Esophagus squamous epithelium (tissue), 5 donors: ENCODE measurements at regions of chr21 and their contacts with region 1.

Region 1: GRCh38 chr21:36429947-36430546 is 44.9 kb downstream of the CHAF1B start:
- DNase-seq: peak; percentile 22
- H3K4me3 ChIP-seq: peak overlapping the region; percentile 3 to 50 (median 36)
- H3K27ac ChIP-seq: peak overlapping the region; percentile 78 to 87 (median 82)
- H3K4me1 ChIP-seq: peaks cover 0 to 64% (median 31%) of the 10 kb centered on the region in 3 donors
- H3K27me3 ChIP-seq: no peaks in the 10 kb centered on the region
- CTCF ChIP-seq: peak in 3 of 6 experiments; percentile 2 to 38 (median 34)
- POLR2A ChIP-seq: peak in 3 of 4 donors; percentile 38 to 68 (median 58)

Region 2: DNA sequence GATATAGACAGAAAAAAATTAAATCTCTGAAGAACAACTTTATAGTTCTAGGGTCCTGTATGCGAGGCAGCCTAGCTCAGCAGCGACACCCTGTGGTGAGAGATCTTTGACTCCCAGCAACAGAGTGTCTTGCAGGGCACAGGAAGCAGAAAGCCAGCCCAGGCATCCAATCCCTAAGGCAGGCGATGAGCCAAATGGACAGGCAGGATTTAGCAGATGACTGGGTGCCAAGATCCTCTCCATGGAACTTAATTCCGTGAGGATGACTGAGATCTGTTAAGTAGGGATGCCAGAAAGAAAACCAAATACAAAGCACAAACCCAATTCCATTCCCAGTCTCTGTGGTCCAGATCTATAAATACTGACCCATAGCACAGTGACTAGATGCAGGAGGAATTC is 497.7 kb after region 1 on chr21:
- intact Hi-C with region 1: loop called (anchors 10 kb)
- DNase-seq: no peak
- H3K4me3 ChIP-seq: no peak overlapping the region
- H3K27ac ChIP-seq: no peak overlapping the region
- H3K4me1 ChIP-seq: peaks cover 0 to 40% (median 0%) of the 10 kb centered on the region in 3 donors
- H3K27me3 ChIP-seq: no peaks in the 10 kb centered on the region
- CTCF ChIP-seq: peak; percentile 78 to 90 (median 87)
- POLR2A ChIP-seq: no peak